ENCODE measurements at regions of chr17 and their contacts with region 1.

Region 1: DNA sequence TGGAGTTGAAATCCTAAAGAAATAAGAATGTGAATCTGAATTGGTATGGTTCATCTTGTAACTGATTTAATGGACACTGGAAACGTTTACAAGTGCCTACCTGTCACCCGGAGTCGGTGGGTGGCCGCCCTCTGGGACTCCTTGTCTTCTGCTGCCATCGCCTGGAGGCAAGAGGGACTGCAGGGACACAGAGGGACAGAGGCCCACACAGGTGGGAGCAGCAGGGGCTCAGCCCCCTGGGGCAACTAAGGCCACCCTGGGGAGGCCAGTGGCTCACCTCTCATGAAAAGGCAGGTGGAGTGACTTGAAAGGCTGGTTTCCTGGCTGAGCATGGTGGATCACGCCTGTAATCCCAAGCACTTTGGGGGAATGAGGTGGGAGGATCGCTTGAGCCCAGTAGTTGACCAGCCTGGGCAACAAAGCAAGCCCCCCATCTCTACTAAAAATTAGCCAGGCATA is 23.2 kb downstream of the TMEM92 start:
- H3K4me3 ChIP-seq: no peak overlapping the region
- H3K27ac ChIP-seq: no peak overlapping the region
- H3K4me1 ChIP-seq: no peaks in the 10 kb centered on the region
- CTCF ChIP-seq: peak; percentile 92

Region 2: DNA sequence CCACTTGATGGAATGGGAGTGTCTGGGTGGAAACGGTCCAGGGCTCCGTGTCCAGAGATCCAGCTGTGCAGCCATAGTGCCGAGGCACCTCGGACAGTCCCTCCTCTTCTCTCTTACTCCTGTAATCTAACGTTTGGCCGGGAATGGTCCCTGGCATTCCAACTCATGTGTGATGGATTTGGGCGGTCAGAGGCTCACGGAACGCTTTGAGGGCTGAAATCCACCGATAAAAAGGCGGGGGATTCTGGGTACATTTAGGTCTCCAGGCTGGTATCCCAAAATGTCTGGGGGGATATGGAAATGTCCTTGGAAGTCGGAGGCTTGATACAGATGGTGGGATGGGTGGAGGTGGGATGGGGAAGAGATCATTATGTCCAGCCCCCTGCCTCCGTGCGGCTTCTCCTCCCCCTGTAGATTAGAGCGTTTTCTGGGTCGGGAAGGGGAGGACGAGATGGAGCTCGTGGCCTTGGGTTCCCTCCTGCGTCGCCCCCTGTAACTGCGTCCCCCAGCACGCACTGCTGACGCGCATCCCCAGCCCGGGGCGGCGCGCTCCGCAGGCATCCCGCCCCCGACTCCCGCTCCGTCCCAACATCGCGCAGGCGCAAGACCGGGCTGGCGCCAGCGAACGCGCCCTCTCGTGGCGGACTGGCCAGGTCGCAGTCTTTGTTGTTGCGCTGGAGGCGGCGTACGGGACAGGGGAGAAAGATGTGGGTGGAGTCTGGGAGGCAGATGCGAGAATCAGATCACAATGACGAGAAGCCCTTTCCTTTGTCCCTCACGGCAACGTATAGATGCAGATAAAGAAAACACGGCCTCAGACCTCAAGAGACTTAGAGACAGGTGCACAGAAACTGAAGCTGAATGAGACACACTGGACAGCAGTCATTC is 136.2 kb before region 1 on chr17:
- CTCF ChIA-PET with region 1: interaction called, 106 read pairs
- POLR2A ChIA-PET with region 1: no interaction called
- H3K4me3 ChIP-seq: peak overlapping the region; percentile 54
- H3K27ac ChIP-seq: peak overlapping the region; percentile 17; the same call in 1 of the 2 replicates
- H3K4me1 ChIP-seq: no peaks in the 10 kb centered on the region
- CTCF ChIP-seq: peak; percentile 100

Region 3: GRCh38 chr17:50177983-50178834 is 119.2 kb before region 1 on chr17:
- CTCF ChIA-PET with region 1: interaction called, 20 read pairs
- POLR2A ChIA-PET with region 1: no interaction called
- H3K4me3 ChIP-seq: no peak overlapping the region
- H3K27ac ChIP-seq: peak overlapping the region; percentile 76
- H3K4me1 ChIP-seq: peaks cover 11% of the 10 kb centered on the region
- CTCF ChIP-seq: peak; percentile 99

Region 4: DNA sequence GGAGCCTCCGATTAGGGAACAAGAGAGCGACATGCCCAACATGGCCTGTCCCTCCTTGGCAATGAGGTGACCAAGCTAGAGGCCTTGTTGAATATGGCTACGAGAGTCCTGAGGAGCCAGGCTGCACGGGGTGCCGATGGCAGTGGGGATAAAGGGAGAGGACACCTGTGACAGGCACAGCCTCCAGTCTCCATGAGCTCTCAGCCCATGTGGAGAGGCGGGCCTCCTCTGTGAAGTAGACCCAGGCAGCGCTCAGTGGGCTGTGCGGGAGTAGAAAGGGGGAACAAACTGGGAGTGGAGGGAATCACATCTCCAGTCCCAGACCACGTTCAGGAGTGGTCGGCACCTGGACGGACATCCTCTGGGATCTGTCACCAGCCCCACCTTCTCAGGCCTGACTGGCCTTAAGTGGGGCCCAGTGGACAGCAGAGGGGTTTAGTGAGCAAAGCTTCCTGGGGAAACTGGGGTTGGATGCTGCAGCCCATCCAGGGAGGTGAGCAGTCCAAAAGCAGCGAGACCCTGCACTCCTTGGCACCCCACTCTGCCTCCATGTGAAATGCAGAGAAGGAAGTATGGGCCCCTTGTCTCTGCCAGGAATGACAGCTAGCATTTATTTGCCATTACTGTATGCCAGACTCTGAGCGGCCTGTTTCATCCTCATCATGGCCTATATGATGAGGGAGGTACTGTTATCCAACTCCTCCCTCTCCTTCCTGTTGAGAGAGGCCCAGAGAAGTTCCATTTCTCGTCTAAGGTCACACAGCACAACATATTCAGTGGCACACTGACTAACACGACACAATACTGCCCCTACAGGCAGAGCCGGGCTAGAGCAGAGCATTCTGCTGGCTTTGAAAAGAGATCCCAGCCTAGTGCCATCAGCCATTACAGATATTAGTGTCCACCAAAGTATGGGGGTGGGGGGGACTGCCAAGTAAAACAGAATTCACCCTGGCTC is 27.7 kb before region 1 on chr17:
- CTCF ChIA-PET with region 1: interaction called, 263 read pairs
- POLR2A ChIA-PET with region 1: interaction called, 3 read pairs
- H3K4me3 ChIP-seq: no peak overlapping the region
- H3K27ac ChIP-seq: no peak overlapping the region
- H3K4me1 ChIP-seq: peaks cover 12% of the 10 kb centered on the region
- CTCF ChIP-seq: peak; percentile 31; the same call in 1 of the 2 replicates

Region 5: DNA sequence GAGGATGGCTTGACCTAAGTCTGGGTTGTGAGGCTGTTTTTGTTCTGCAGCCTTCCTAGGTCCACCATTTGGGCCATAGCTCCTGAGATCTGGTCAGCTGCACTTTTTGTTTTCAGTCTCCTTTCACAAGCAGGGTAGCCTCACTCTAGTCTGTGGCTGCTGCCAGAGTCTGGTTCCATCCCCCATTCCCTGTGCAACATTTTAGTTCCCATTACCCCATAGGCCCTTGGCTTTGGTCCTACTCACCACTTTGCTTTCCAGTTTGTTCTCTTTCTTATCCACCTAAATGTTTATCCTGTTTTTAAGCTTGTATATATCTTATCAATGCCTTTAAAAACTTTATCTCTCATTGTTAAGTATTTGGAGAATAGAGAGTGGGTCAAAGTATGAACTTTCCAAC is 41.9 kb after region 1 on chr17:
- CTCF ChIA-PET with region 1: interaction called, 10 read pairs
- POLR2A ChIA-PET with region 1: no interaction called
- H3K4me3 ChIP-seq: no peak overlapping the region
- H3K27ac ChIP-seq: no peak overlapping the region
- H3K4me1 ChIP-seq: no peaks in the 10 kb centered on the region
- CTCF ChIP-seq: no peak

Region 6: DNA sequence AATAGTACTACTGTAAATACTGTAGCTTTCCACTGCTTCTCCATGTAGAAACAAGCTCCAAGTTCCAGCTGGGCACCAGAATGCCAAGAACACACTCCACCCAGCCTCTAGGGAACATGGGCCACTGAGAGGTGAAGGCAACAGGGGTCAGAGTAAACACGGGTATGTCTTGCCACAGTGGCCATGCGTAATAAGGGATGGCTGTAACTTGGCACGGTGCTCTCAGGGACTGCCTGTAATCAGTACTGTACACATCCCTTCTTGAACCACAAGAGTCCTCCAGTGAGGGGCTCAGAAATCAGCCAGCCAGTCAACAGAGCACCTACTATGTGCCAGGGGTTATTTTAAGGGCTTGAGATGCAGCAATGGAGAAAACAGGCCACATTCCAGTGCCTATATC is 89.1 kb after region 1 on chr17:
- CTCF ChIA-PET with region 1: no interaction called
- POLR2A ChIA-PET with region 1: no interaction called
- H3K4me3 ChIP-seq: no peak overlapping the region
- H3K27ac ChIP-seq: peak overlapping the region; percentile 2; the same call in 1 of the 2 replicates
- H3K4me1 ChIP-seq: no peaks in the 10 kb centered on the region
- CTCF ChIP-seq: no peak